CD4-positive, alpha-beta T cell (primary cell): ENCODE measurements at regions of chr22 and their contacts with region 1.

Region 1: GRCh38 chr22:42090596-42091454 is at the start of gene NDUFA6:
- DNase-seq: peak; percentile 94 to 100 (median 98)
- ATAC-seq: peak; percentile 88
- H3K4me3 ChIP-seq: peak within 1 kb of the TSS; percentile 99
- H3K4me3 Mint-ChIP-seq: peak within 1 kb of the TSS; percentile 100
- H3K27ac ChIP-seq: peak within 1 kb of the TSS; percentile 97 to 99
- H3K27ac Mint-ChIP-seq: peak within 1 kb of the TSS; percentile 100
- H3K4me1 ChIP-seq: peaks cover 35% of the 10 kb centered on the region
- H3K4me1 Mint-ChIP-seq: peaks cover 39% of the 10 kb centered on the region
- H3K27me3 ChIP-seq: no peaks in the 10 kb centered on the region
- H3K27me3 Mint-ChIP-seq: no peaks in the 10 kb centered on the region
- CTCF ChIP-seq: peak; percentile 94
- total RNA-seq, gene NDUFA6: 52.8 to 59.8 TPM

Region 2: GRCh38 chr22:42070517-42071422 is 20.1 kb before region 1 on chr22 and contains the start of gene NAGA:
- CTCF ChIA-PET with region 1: interaction called, 11 read pairs
- POLR2A ChIA-PET with region 1: interaction called, 19 read pairs
- intact Hi-C with region 1: loop called in 1 of 2 experiments (anchors 2 kb)
- DNase-seq: peak; percentile 75 to 96 (median 86)
- ATAC-seq: peak; percentile 98
- H3K4me3 ChIP-seq: peak within 1 kb of the TSS; percentile 84
- H3K4me3 Mint-ChIP-seq: peak within 1 kb of the TSS; percentile 95
- H3K27ac ChIP-seq: peak within 1 kb of the TSS; percentile 74 to 76
- H3K27ac Mint-ChIP-seq: peak within 1 kb of the TSS; percentile 95
- H3K4me1 ChIP-seq: peaks cover 55% of the 10 kb centered on the region
- H3K4me1 Mint-ChIP-seq: peaks cover 59% of the 10 kb centered on the region
- H3K27me3 ChIP-seq: no peaks in the 10 kb centered on the region
- H3K27me3 Mint-ChIP-seq: no peaks in the 10 kb centered on the region
- CTCF ChIP-seq: no peak
- total RNA-seq, gene NAGA: 2.6 to 3.2 TPM

Region 3: GRCh38 chr22:42116848-42117424 is 26.1 kb after region 1 on chr22:
- CTCF ChIA-PET with region 1: interaction called, 12 read pairs
- POLR2A ChIA-PET with region 1: interaction called, 6 read pairs
- intact Hi-C with region 1: no loop called
- DNase-seq: no peak
- ATAC-seq: no peak
- H3K4me3 ChIP-seq: no peak overlapping the region
- H3K4me3 Mint-ChIP-seq: no peak overlapping the region
- H3K27ac ChIP-seq: no peak overlapping the region
- H3K27ac Mint-ChIP-seq: no peak overlapping the region
- H3K4me1 ChIP-seq: peaks cover 23% of the 10 kb centered on the region
- H3K4me1 Mint-ChIP-seq: peaks cover 43% of the 10 kb centered on the region
- H3K27me3 ChIP-seq: no peaks in the 10 kb centered on the region
- H3K27me3 Mint-ChIP-seq: no peaks in the 10 kb centered on the region
- CTCF ChIP-seq: no peak

Region 4: GRCh38 chr22:42169055-42169469 is 78.2 kb after region 1 on chr22:
- CTCF ChIA-PET with region 1: interaction called, 5 read pairs
- POLR2A ChIA-PET with region 1: no interaction called
- intact Hi-C with region 1: loop called in 1 of 2 experiments (anchors 5 kb)
- DNase-seq: peak; percentile 57 to 86 (median 72)
- ATAC-seq: peak; percentile 93
- H3K4me3 ChIP-seq: no peak overlapping the region
- H3K4me3 Mint-ChIP-seq: no peak overlapping the region
- H3K27ac ChIP-seq: no peak overlapping the region
- H3K27ac Mint-ChIP-seq: no peak overlapping the region
- H3K4me1 ChIP-seq: peaks cover 13% of the 10 kb centered on the region
- H3K4me1 Mint-ChIP-seq: peaks cover 34% of the 10 kb centered on the region
- H3K27me3 ChIP-seq: no peaks in the 10 kb centered on the region
- H3K27me3 Mint-ChIP-seq: no peaks in the 10 kb centered on the region
- CTCF ChIP-seq: peak; percentile 71

Region 5: GRCh38 chr22:42313804-42314581 is 223.2 kb after region 1 on chr22:
- CTCF ChIA-PET with region 1: interaction called, 8 read pairs
- POLR2A ChIA-PET with region 1: interaction called, 6 read pairs
- intact Hi-C with region 1: loop called (anchors 5 to 10 kb)
- DNase-seq: peak in 12 of 14 experiments; percentile 21 to 76 (median 48)
- ATAC-seq: peak; percentile 88
- H3K4me3 ChIP-seq: no peak overlapping the region
- H3K4me3 Mint-ChIP-seq: peak overlapping the region; percentile 54
- H3K27ac ChIP-seq: no peak overlapping the region
- H3K27ac Mint-ChIP-seq: peak overlapping the region; percentile 72
- H3K4me1 ChIP-seq: peaks cover 68% of the 10 kb centered on the region
- H3K4me1 Mint-ChIP-seq: peaks cover 59% of the 10 kb centered on the region
- H3K27me3 ChIP-seq: no peaks in the 10 kb centered on the region
- H3K27me3 Mint-ChIP-seq: no peaks in the 10 kb centered on the region
- CTCF ChIP-seq: peak; percentile 26

Region 6: GRCh38 chr22:42437488-42438292 is 346.9 kb after region 1 on chr22:
- CTCF ChIA-PET with region 1: interaction called, 22 read pairs
- POLR2A ChIA-PET with region 1: interaction called, 5 read pairs
- intact Hi-C with region 1: loop called (anchors 1 kb)
- DNase-seq: peak; percentile 74 to 90 (median 84)
- ATAC-seq: peak; percentile 97
- H3K4me3 ChIP-seq: peak overlapping the region; percentile 64
- H3K4me3 Mint-ChIP-seq: peak overlapping the region; percentile 74
- H3K27ac ChIP-seq: no peak overlapping the region
- H3K27ac Mint-ChIP-seq: no peak overlapping the region
- H3K4me1 ChIP-seq: peaks cover 11% of the 10 kb centered on the region
- H3K4me1 Mint-ChIP-seq: peaks cover 10% of the 10 kb centered on the region
- H3K27me3 ChIP-seq: peaks cover 0 to 3% of the 10 kb centered on the region in 2 experiments
- H3K27me3 Mint-ChIP-seq: no peaks in the 10 kb centered on the region
- CTCF ChIP-seq: peak; percentile 96

Region 7: DNA sequence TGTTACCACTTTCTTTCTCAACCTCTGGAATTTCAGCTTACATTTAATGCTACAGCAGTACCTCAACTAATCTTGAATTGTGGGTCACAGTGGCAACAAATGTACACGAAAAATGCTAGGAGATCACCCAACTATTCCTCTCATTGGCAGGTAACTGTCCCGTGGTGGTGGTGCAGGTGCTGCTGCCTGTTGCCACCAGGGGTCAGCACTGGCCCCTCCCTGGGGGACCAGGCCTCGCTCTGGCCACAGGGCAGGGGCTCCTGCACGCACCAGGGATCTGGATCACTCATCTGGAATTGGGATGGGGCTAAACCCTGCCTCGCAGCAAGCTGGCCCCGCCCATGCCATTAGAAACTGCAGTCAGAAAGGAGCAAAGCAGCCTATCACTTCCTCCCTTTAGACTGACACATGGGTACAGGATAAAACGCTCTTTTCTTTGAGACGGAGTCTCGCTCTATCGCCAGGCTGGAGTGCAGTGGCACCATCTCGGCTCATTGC is 530.7 kb after region 1 on chr22:
- CTCF ChIA-PET with region 1: no interaction called
- POLR2A ChIA-PET with region 1: no interaction called
- intact Hi-C with region 1: no loop called
- DNase-seq: peak; percentile 27 to 73 (median 48)
- ATAC-seq: peak; percentile 83
- H3K4me3 ChIP-seq: no peak overlapping the region
- H3K4me3 Mint-ChIP-seq: no peak overlapping the region
- H3K27ac ChIP-seq: no peak overlapping the region
- H3K27ac Mint-ChIP-seq: peak overlapping the region; percentile 55
- H3K4me1 ChIP-seq: peaks cover 8% of the 10 kb centered on the region
- H3K4me1 Mint-ChIP-seq: peaks cover 6% of the 10 kb centered on the region
- H3K27me3 ChIP-seq: no peaks in the 10 kb centered on the region
- H3K27me3 Mint-ChIP-seq: no peaks in the 10 kb centered on the region
- CTCF ChIP-seq: peak; percentile 88